ENCODE measurements at regions of chr9 and their contacts with region 1.

Region 1: DNA sequence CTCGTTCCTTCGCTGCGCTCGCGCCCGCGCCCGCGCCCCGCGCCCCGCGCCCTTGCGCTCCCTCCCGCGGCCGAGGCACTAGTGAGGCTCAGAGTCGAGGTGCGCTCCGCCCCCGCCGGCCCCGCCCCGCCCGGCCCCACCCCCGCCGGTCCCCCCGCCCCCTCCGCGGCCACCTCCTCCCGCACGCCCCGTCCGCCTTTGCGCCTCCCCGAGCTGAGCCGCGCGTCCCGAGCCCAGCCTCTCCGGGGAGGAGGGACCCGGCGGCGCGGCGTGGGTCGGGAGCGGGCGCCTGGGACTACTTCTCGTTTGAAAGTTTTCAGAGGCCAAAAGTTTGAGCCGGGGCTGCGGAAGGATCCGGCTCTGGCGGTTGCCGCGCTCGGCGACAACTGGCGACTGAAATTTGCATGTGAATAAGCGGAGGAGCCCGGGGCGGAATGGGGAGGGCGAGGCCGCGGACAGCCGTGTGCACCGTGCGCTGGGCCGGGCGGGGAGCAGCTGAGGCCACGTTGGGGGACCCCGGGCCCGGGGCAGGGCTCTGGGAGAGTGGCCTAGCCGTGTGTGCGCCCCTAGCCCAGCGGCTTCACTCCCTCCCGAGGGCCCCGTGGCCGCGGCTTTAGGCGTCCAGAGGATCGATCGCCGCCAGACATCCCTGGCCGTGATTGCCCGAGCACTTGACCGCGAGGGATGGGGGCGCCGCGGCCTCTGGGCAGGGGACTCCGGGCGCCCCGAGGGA is at the start of gene NOTCH1:
- DNase-seq: peak; percentile 70 to 96
- H3K4me3 ChIP-seq: peak within 1 kb of the TSS; percentile 68 to 96
- H3K27ac ChIP-seq: peak within 1 kb of the TSS; percentile 95 to 98
- H3K4me1 ChIP-seq: peaks cover 24 to 57% of the 10 kb centered on the region in 2 donors
- H3K27me3 ChIP-seq: no peaks in the 10 kb centered on the region
- CTCF ChIP-seq: peak in 1 of 3 experiments; percentile 18
- total RNA-seq, gene NOTCH1: 120 TPM

Region 2: GRCh38 chr9:136567651-136568287 is 21.6 kb after region 1 on chr9:
- intact Hi-C with region 1: loop called (anchors 1 kb)
- DNase-seq: peak; percentile 55 to 90
- H3K4me3 ChIP-seq: peak overlapping the region in 1 of 2 donors; percentile 14
- H3K27ac ChIP-seq: peak overlapping the region; percentile 65 to 66
- H3K4me1 ChIP-seq: peaks cover 34 to 58% of the 10 kb centered on the region in 2 donors
- H3K27me3 ChIP-seq: no peaks in the 10 kb centered on the region
- CTCF ChIP-seq: no peak

Region 3: DNA sequence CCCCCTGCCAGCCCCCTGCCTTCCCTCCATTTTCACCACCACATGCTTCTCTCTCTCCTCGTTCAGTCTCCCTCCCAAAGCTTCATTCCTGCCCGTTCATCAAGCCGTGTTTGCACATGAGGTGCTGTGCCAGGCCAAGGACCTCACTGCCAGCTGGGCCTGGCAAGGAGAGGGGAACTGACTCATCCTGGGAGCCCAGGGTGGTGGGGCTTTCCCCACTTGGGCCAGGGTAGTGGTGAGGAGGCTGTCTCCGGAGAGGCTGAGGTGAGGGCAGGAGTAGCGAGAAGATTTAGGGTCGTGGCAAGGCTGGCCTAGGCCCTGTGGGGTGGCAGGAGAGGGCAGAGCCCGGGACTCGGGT is 30.1 kb after region 1 on chr9:
- intact Hi-C with region 1: loop called (anchors 1 kb)
- DNase-seq: peak; percentile 41 to 89
- H3K4me3 ChIP-seq: no peak overlapping the region
- H3K27ac ChIP-seq: peak overlapping the region in 1 of 2 donors; percentile 3
- H3K4me1 ChIP-seq: peaks cover 25 to 30% of the 10 kb centered on the region in 2 donors
- H3K27me3 ChIP-seq: no peaks in the 10 kb centered on the region
- CTCF ChIP-seq: no peak

Region 4: GRCh38 chr9:136625101-136626060 is 79.2 kb after region 1 on chr9:
- intact Hi-C with region 1: loop called (anchors 2 kb)
- DNase-seq: peak in 1 of 2 donors; percentile 84
- H3K4me3 ChIP-seq: no peak overlapping the region
- H3K27ac ChIP-seq: peak overlapping the region; percentile 50 to 53
- H3K4me1 ChIP-seq: peaks cover 16 to 22% of the 10 kb centered on the region in 2 donors
- H3K27me3 ChIP-seq: no peaks in the 10 kb centered on the region
- CTCF ChIP-seq: peak; percentile 18 to 65 (median 20)

Measured in ascending aorta (tissue), 2 donors.